ENCODE measurements at regions of chr14 and their contacts with region 1.

Region 1: GRCh38 chr14:55160989-55161388 is 30.4 kb downstream of the DLGAP5 start:
- DNase-seq: no peak
- H3K4me3 ChIP-seq: no peak overlapping the region
- CTCF ChIP-seq: peak; percentile 22

Region 2: DNA sequence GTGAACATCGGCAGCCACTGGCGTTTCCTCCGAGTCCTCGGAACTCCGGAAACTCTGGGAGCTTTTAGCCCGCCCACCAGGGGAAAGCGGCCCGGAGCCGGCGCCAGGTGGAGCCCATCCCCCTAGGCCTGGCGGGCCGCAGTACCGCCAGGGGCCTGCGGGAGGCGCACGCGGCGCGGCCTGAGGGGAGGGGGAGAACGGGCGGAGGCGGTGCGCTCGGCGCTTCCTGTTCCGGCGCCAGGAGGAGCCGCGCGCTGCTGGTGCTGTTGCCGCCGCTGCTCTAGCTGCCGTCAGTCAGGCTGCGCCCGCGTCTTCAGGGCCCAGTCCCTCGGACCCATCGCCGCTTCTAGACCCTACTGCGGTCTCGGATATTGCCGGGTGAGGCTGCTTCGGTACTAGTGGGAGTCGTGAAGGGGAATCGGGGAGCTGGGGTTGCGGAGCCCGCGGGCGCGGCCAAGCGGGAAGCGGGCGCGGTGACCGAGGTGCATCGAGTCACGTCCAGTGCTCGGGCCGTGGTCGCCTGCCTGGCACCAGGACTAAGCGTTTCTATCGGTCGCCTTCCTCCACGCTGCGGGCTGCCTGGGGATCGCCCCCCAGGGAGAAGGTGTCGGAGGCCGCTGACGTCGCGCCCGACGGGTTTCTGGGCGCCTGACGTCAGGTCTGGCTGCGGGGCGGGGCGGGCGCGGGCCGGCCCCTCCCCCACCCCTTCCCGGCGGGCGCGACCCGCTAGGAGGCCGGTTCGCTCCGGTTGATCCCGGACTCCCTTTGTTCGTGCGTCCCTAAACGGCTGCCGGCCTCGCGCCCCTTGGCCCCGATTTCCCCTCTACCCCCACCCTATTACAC is 109.3 kb before region 1 on chr14 and contains the start of gene MAPK1IP1L:
- CTCF ChIA-PET with region 1: interaction called, 42 read pairs
- POLR2A ChIA-PET with region 1: interaction called, 3 read pairs
- DNase-seq: no peak
- H3K4me3 ChIP-seq: peak within 1 kb of the TSS; percentile 99
- CTCF ChIP-seq: peak; percentile 92

Region 3: GRCh38 chr14:55077155-55077554 is 83.8 kb before region 1 on chr14:
- CTCF ChIA-PET with region 1: interaction called, 14 read pairs
- POLR2A ChIA-PET with region 1: no interaction called
- DNase-seq: no peak
- H3K4me3 ChIP-seq: no peak overlapping the region
- CTCF ChIP-seq: no peak

Region 4: GRCh38 chr14:55094321-55095157 is 66.5 kb before region 1 on chr14:
- CTCF ChIA-PET with region 1: interaction called, 174 read pairs
- POLR2A ChIA-PET with region 1: no interaction called
- DNase-seq: no peak
- H3K4me3 ChIP-seq: no peak overlapping the region
- CTCF ChIP-seq: no peak

Region 5: GRCh38 chr14:55136885-55137786 is 23.9 kb before region 1 on chr14:
- CTCF ChIA-PET with region 1: interaction called, 15 read pairs
- POLR2A ChIA-PET with region 1: no interaction called
- DNase-seq: no peak
- H3K4me3 ChIP-seq: no peak overlapping the region
- CTCF ChIP-seq: no peak

Region 6: DNA sequence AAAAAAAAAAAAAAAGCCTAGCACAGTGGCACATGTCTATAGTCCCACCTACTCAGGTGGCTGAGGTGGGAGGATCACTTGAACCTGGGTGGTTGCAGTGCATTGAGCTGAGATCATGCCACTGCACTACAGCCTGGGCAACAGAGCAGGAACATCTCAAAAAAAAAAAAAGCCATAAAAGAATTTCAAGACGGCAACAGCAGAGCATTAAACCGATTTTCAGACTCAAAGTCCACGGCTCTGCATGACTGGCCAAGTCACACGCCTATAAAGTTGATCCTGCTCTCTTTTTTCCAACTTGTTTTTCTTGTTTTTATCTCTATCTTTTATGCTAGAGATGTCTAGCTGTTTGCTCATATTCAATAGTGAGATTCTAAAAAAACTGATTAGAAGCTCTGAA is 155.6 kb after region 1 on chr14:
- CTCF ChIA-PET with region 1: no interaction called
- POLR2A ChIA-PET with region 1: no interaction called
- DNase-seq: no peak
- H3K4me3 ChIP-seq: no peak overlapping the region
- CTCF ChIP-seq: no peak